ENCODE measurements at regions of chr15 and their contacts with region 1.

Region 1: DNA sequence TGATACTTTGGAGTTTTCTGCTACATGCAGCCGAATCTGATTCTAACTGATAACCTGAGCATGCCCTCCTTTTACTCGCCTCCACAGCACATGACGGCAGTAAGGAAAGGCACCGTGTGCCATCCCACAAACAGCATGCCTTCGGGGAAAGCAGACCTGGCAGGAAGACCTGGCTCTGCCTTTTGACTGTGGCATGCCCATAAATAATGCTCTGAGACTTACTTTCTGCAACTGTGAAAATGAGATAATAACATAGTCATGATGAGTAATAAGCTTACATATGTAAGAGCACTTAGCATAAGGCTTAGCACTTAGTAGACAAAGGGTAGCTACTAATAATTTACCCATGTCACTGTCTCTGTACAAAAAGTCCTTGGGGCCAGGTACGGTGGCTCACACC is 32.9 kb downstream of the MTHFS start:
- DNase-seq: peak; percentile 73
- H3K4me3 ChIP-seq: no peak overlapping the region
- H3K27ac ChIP-seq: peak overlapping the region; percentile 39
- H3K4me1 ChIP-seq: peaks cover 19% of the 10 kb centered on the region
- H3K27me3 ChIP-seq: no peaks in the 10 kb centered on the region
- CTCF ChIP-seq: no peak
- POLR2A ChIP-seq: no peak

Region 2: GRCh38 chr15:78429477-78429876 is 1434.4 kb before region 1 on chr15:
- CTCF ChIA-PET with region 1: no interaction called
- POLR2A ChIA-PET with region 1: no interaction called
- dilution Hi-C with region 1: no loop called
- intact Hi-C with region 1: no loop called
- DNase-seq: no peak
- H3K4me3 ChIP-seq: no peak overlapping the region
- H3K27ac ChIP-seq: no peak overlapping the region
- H3K4me1 ChIP-seq: no peaks in the 10 kb centered on the region
- H3K27me3 ChIP-seq: peaks cover 22 to 35% of the 10 kb centered on the region in 2 experiments
- CTCF ChIP-seq: no peak
- POLR2A ChIP-seq: no peak

Region 3: DNA sequence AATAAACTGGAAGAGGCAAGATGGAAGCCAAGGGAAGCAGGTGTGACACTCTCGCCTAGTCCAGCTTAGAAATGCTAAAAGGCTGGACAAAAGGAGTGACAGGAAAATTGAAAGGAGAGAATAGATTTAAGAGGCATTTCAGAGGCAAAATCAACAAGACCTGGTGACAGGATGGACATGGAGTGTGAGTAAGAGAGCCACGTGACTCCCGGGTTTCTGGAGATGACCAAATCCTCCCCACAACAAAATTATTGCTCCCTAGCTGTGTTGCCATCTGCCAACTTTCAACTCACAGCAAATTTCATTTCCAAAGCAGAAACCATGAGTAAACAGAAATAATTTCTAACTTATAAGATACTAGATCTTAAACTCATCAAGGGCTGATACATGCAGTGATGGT is 19.7 kb before region 1 on chr15:
- CTCF ChIA-PET with region 1: interaction called, 3 read pairs
- POLR2A ChIA-PET with region 1: no interaction called
- dilution Hi-C with region 1: no loop called
- intact Hi-C with region 1: loop called (anchors 1 kb)
- DNase-seq: no peak
- H3K4me3 ChIP-seq: no peak overlapping the region
- H3K27ac ChIP-seq: no peak overlapping the region
- H3K4me1 ChIP-seq: no peaks in the 10 kb centered on the region
- H3K27me3 ChIP-seq: no peaks in the 10 kb centered on the region
- CTCF ChIP-seq: no peak
- POLR2A ChIP-seq: no peak

Region 4: GRCh38 chr15:80127911-80128310 is 264.0 kb after region 1 on chr15:
- CTCF ChIA-PET with region 1: no interaction called
- POLR2A ChIA-PET with region 1: no interaction called
- dilution Hi-C with region 1: no loop called
- intact Hi-C with region 1: no loop called
- DNase-seq: peak; percentile 51
- H3K4me3 ChIP-seq: no peak overlapping the region
- H3K27ac ChIP-seq: peak overlapping the region; percentile 26
- H3K4me1 ChIP-seq: peaks cover 12% of the 10 kb centered on the region
- H3K27me3 ChIP-seq: no peaks in the 10 kb centered on the region
- CTCF ChIP-seq: no peak
- POLR2A ChIP-seq: no peak

Measured in endothelial cell of umbilical vein (primary cell).